ENCODE measurements at regions of chr13 and their contacts with region 1.

Region 1: DNA sequence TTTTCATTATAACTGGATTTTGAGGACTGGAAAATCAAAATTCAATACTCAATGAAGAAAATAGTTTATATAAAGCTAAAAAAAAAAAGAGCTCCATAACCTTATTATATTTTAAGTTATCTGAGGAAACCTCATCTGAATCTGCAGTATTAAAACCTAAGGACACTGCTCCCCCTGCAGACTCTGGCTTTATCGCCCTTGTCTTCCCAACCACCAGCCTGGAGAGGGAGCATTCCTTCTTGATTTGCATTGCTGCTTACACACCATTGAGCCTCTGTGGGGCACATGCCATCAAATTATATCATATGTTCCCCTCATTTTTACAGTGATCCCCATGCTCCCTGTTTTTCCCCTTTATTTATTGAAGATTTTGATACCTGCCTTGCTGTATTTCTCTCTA is 871.4 kb upstream of the GPC6 start:
- DNase-seq: peak; percentile 47
- H3K4me3 Mint-ChIP-seq: no peak overlapping the region
- H3K27ac Mint-ChIP-seq: no peak overlapping the region
- H3K4me1 Mint-ChIP-seq: no peaks in the 10 kb centered on the region
- H3K27me3 Mint-ChIP-seq: no peaks in the 10 kb centered on the region
- CTCF ChIP-seq: peak; percentile 30

Region 2: DNA sequence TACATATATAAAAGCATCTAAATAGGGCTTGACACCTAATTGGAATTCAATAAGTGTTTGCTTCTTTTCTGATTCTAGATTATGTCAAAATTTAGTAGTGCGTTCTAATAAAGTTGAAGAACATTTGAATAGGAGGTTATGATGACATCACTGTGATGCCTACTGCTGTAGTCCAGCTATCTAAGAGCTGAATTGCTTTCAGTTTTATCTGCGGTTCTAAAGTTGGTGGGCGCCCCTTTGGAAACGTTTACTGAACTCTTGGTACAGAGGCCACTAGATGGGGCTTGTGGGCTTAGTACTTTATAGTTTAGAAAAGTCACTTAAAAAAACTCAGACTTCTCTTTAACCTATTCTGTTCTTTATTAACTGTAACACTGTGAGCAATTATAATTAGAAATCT is 179.9 kb before region 1 on chr13:
- CTCF ChIA-PET with region 1: interaction called, 11 read pairs
- POLR2A ChIA-PET with region 1: no interaction called
- intact Hi-C with region 1: no loop called
- DNase-seq: peak; percentile 41
- H3K4me3 Mint-ChIP-seq: no peak overlapping the region
- H3K27ac Mint-ChIP-seq: no peak overlapping the region
- H3K4me1 Mint-ChIP-seq: no peaks in the 10 kb centered on the region
- H3K27me3 Mint-ChIP-seq: peaks cover 16% of the 10 kb centered on the region
- CTCF ChIP-seq: peak; percentile 39

Region 3: GRCh38 chr13:92530364-92530763 is 175.2 kb after region 1 on chr13:
- CTCF ChIA-PET with region 1: no interaction called
- POLR2A ChIA-PET with region 1: no interaction called
- intact Hi-C with region 1: loop called (anchors 1 kb)
- DNase-seq: no peak
- H3K4me3 Mint-ChIP-seq: no peak overlapping the region
- H3K27ac Mint-ChIP-seq: no peak overlapping the region
- H3K4me1 Mint-ChIP-seq: no peaks in the 10 kb centered on the region
- H3K27me3 Mint-ChIP-seq: no peaks in the 10 kb centered on the region
- CTCF ChIP-seq: peak; percentile 21